CD4-positive, alpha-beta T cell (primary cell): ENCODE measurements at regions of chr20 and their contacts with region 1.

Region 1: DNA sequence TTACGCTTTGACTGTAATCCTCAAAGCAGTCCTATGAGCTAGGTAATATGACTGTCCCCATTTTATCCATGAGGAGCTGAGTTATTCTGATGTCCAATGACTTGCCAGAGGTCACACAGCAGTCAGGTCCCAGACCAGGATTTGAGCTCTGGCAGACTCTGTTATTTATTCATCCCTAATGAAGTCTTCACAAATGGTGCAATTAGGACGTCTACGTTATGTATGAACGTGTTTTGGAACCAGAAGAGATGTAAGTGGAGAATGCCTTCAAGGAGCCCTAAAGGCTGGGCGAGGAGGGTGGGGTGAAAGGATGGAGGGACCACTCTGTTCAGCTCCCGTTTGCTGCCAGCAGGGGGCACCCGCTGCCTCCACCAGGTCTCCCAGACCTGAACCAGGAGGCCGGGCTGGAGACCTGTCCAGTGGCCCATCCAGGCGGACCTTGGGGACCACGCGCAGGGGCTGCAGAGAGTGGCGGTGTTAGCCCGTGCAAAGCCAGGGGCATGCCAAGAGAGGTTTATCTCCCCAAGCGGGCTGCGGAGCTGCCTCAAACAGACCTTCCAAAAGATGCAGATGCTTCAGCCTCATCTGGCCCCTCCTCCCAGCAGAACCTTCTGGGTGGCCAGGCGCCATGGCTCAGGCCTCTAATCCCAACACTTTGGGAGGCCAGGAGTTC is 15.2 kb upstream of the ZNF335 start:
- DNase-seq: peak; percentile 64 to 86 (median 72)
- ATAC-seq: peak; percentile 97
- H3K4me3 ChIP-seq: no peak overlapping the region
- H3K4me3 Mint-ChIP-seq: no peak overlapping the region
- H3K27ac ChIP-seq: no peak overlapping the region
- H3K27ac Mint-ChIP-seq: no peak overlapping the region
- H3K4me1 ChIP-seq: peaks cover 7% of the 10 kb centered on the region
- H3K4me1 Mint-ChIP-seq: no peaks in the 10 kb centered on the region
- H3K27me3 ChIP-seq: peaks cover 0 to 5% of the 10 kb centered on the region in 2 experiments
- H3K27me3 Mint-ChIP-seq: no peaks in the 10 kb centered on the region
- CTCF ChIP-seq: peak; percentile 91

Region 2: DNA sequence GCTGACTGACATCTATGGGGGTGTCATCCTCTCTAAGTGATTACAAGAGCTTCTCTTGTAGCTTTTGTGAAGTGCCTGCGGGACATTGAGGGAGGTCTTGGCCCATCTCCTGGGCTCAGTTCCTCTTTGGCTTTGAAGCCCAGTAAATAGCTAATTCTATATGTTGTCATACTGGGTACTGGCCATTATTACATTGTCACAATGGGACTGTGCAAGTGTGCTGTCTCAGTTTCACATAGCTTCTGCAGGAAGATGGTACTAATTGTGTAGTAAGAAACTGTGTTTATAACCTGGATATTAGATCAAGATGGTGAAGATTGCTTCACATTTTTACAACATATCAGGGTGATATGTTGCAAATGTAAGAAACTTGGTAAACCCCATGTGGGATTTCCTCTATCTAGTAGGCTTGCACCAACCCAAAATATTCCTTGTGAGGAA is 491.7 kb before region 1 on chr20:
- CTCF ChIA-PET with region 1: no interaction called
- POLR2A ChIA-PET with region 1: no interaction called
- intact Hi-C with region 1: no loop called
- DNase-seq: peak in 2 of 14 experiments; percentile 19 to 20
- ATAC-seq: no peak
- H3K4me3 ChIP-seq: no peak overlapping the region
- H3K4me3 Mint-ChIP-seq: no peak overlapping the region
- H3K27ac ChIP-seq: no peak overlapping the region
- H3K27ac Mint-ChIP-seq: no peak overlapping the region
- H3K4me1 ChIP-seq: no peaks in the 10 kb centered on the region
- H3K4me1 Mint-ChIP-seq: no peaks in the 10 kb centered on the region
- H3K27me3 ChIP-seq: peaks cover 8 to 16% of the 10 kb centered on the region in 2 experiments
- H3K27me3 Mint-ChIP-seq: peaks cover 39% of the 10 kb centered on the region
- CTCF ChIP-seq: no peak

Region 3: DNA sequence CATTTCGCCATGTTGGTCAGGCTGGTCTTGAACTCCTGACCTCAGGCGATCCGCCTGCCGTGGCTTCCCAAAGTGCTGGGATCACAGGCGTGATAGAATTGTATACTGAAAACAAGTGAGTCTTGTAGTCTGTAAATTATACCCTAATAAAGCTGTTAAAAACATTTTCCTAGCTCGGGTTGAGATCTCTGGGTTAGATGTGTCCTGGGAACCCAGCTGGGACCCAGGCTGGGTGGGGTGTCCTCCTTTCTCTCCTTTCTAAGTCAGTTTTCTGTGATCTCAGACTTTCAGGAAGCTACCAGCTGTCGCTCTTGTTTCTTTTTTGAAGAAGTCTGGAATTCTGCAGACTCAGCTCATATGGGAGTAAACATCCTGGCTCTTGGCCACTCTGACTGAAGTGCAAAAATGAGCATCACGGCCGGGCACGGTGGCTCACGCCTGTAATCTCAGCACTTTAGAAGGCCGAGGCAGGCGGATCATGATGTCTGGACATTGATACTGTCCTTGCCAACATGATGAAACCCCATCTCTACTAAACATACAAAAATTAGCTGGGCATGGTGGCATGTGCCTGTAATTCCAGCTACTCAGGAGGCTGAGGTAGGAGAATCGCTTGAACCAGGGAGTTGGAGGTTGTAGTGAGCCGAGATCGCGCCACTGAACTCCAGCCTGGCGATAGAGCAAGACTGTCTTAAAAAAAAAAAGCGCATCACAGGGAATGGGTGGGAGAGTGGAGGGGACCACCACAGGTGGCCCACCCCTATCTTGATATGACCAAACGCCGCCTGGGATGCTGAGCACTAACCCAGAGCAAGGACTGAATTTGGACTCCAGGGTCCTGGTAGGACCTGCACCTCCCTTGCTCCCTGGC is 62.6 kb before region 1 on chr20:
- CTCF ChIA-PET with region 1: no interaction called
- POLR2A ChIA-PET with region 1: no interaction called
- intact Hi-C with region 1: no loop called
- DNase-seq: no peak
- ATAC-seq: no peak
- H3K4me3 ChIP-seq: no peak overlapping the region
- H3K4me3 Mint-ChIP-seq: no peak overlapping the region
- H3K27ac ChIP-seq: no peak overlapping the region
- H3K27ac Mint-ChIP-seq: no peak overlapping the region
- H3K4me1 ChIP-seq: peaks cover 3% of the 10 kb centered on the region
- H3K4me1 Mint-ChIP-seq: peaks cover 4% of the 10 kb centered on the region
- H3K27me3 ChIP-seq: no peaks in the 10 kb centered on the region
- H3K27me3 Mint-ChIP-seq: peaks cover 7% of the 10 kb centered on the region
- CTCF ChIP-seq: no peak

Region 4: DNA sequence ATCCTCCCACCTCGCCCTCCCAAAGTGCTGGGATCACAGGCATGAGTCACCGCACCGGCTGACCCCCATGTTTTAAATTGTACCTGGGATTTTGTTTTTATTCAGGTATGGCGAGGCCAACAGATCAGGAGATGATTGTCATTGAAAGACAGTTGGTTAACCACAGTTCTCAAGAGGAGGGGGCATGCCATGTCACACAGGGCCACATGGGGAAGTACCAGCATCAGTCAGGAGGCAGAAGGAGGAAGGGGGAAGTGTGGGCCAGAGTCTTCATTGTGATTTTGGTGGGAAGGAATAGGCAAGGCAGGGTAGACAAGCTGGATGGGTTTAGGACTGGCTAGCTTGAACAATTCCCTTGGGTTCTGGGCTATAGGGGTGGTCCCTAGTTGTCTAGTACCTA is 11.5 kb after region 1 on chr20:
- CTCF ChIA-PET with region 1: interaction called, 20 read pairs
- POLR2A ChIA-PET with region 1: interaction called, 5 read pairs
- intact Hi-C with region 1: no loop called
- DNase-seq: peak in 3 of 14 experiments; percentile 49 to 77 (median 73)
- ATAC-seq: peak; percentile 84
- H3K4me3 ChIP-seq: no peak overlapping the region
- H3K4me3 Mint-ChIP-seq: peak overlapping the region; percentile 43
- H3K27ac ChIP-seq: no peak overlapping the region
- H3K27ac Mint-ChIP-seq: peak overlapping the region; percentile 8
- H3K4me1 ChIP-seq: peaks cover 70% of the 10 kb centered on the region
- H3K4me1 Mint-ChIP-seq: peaks cover 71% of the 10 kb centered on the region
- H3K27me3 ChIP-seq: no peaks in the 10 kb centered on the region
- H3K27me3 Mint-ChIP-seq: no peaks in the 10 kb centered on the region
- CTCF ChIP-seq: no peak

Region 5: DNA sequence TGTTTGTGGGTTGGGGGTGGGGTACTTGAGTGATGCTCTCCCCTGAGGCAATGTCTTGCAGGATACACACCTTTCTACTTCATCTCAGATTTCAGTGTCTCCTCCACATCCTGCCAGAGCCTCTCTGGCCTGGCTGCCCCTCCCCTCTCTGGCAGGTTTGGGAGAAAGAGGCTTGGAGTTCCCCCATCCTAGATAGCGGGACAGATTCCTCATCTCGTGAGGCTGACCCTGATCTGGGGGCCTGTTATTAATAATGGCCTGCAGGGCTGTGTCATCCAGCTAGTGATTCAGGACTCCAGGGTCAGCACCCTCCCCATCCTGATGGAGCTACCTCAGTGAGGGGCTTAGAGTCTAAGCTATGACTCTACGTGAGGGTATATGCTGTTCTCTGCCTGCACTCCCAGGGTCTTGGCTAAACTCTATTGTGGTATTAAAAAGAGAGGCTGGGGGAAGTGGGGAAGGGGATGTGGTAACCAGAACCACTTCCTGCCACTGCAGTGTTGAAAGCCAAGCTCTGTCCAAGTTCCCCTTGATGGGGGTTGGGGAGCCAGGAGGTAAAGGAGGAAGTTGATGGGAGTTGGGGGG is 17.7 kb after region 1 on chr20:
- CTCF ChIA-PET with region 1: interaction called, 20 read pairs
- POLR2A ChIA-PET with region 1: interaction called, 3 read pairs
- intact Hi-C with region 1: loop called in 1 of 2 experiments (anchors 2 kb)
- DNase-seq: peak in 6 of 14 experiments; percentile 18 to 78 (median 62)
- ATAC-seq: peak; percentile 79
- H3K4me3 ChIP-seq: peak overlapping the region; percentile 44
- H3K4me3 Mint-ChIP-seq: peak overlapping the region; percentile 85
- H3K27ac ChIP-seq: no peak overlapping the region
- H3K27ac Mint-ChIP-seq: peak overlapping the region; percentile 88
- H3K4me1 ChIP-seq: peaks cover 79% of the 10 kb centered on the region
- H3K4me1 Mint-ChIP-seq: peaks cover 84% of the 10 kb centered on the region
- H3K27me3 ChIP-seq: peaks cover 13 to 18% of the 10 kb centered on the region in 2 experiments
- H3K27me3 Mint-ChIP-seq: peaks cover 24% of the 10 kb centered on the region
- CTCF ChIP-seq: no peak

Region 6: GRCh38 chr20:46013826-46014516 is 26.7 kb after region 1 on chr20:
- CTCF ChIA-PET with region 1: interaction called, 27 read pairs
- POLR2A ChIA-PET with region 1: interaction called, 3 read pairs
- intact Hi-C with region 1: loop called (anchors 1 kb)
- DNase-seq: peak; percentile 46 to 88 (median 60)
- ATAC-seq: peak; percentile 57
- H3K4me3 ChIP-seq: peak overlapping the region; percentile 43
- H3K4me3 Mint-ChIP-seq: peak overlapping the region; percentile 35
- H3K27ac ChIP-seq: no peak overlapping the region
- H3K27ac Mint-ChIP-seq: no peak overlapping the region
- H3K4me1 ChIP-seq: peaks cover 55% of the 10 kb centered on the region
- H3K4me1 Mint-ChIP-seq: peaks cover 62% of the 10 kb centered on the region
- H3K27me3 ChIP-seq: peaks cover 41 to 48% of the 10 kb centered on the region in 2 experiments
- H3K27me3 Mint-ChIP-seq: peaks cover 86% of the 10 kb centered on the region
- CTCF ChIP-seq: peak; percentile 96

Region 7: DNA sequence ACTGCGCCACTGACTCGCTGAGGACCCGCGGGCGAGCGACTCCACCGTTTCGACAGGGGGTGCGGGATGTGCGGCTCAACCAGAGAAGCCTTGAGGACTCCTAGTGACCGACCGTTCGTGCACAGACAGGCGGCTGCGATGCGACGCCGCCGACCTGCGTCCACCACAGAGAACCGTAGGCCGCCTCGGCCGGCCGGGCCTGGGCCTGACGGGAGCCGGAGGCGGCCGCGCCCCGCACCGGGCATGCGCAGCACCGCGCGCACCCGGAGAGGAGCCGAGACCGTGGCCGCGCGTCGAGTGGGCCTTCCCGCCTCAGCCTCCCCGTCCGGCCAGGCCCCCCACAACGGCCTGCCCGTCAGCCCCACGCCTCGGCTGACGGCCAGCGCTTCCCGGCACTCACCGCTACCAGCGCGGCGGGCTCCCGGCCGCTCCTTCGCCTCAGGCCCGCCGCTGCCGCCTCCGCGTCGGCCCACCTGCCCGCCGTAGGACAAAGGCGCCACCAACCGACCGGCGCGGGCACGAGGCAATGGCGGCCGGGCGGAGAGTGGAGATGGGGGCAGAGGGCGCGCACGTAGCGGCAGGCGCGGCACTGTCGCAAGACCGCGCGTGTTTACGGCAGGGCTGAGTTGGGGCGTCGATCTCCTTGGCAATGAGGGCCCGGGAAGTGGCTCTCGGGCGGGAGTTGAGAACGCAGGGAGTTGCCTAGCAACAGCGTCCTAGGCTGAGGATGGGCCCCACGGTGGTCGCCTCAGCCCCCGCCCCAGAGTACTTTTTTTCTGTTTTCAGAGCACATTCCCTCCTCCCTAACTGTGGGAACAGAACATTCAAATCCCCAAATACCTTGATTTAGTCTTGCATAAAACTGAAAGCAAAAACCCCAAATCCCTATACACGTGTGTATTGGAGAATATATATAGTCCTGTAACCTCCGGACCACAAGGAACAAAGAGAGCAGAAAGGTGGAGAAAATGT is 102.5 kb after region 1 on chr20 and contains the start of gene NCOA5:
- CTCF ChIA-PET with region 1: interaction called, 4 read pairs
- POLR2A ChIA-PET with region 1: no interaction called
- intact Hi-C with region 1: loop called in 1 of 2 experiments (anchors 1 kb)
- DNase-seq: peak; percentile 86 to 97 (median 92)
- ATAC-seq: peak; percentile 90
- H3K4me3 ChIP-seq: peak within 1 kb of the TSS; percentile 95
- H3K4me3 Mint-ChIP-seq: peak within 1 kb of the TSS; percentile 94
- H3K27ac ChIP-seq: peak within 1 kb of the TSS; percentile 67 to 85
- H3K27ac Mint-ChIP-seq: peak within 1 kb of the TSS; percentile 86
- H3K4me1 ChIP-seq: peaks cover 22% of the 10 kb centered on the region
- H3K4me1 Mint-ChIP-seq: peaks cover 54% of the 10 kb centered on the region
- H3K27me3 ChIP-seq: peaks cover 0 to 3% of the 10 kb centered on the region in 2 experiments
- H3K27me3 Mint-ChIP-seq: no peaks in the 10 kb centered on the region
- CTCF ChIP-seq: no peak
- total RNA-seq, gene NCOA5: 9.7 to 10.5 TPM

Region 8: DNA sequence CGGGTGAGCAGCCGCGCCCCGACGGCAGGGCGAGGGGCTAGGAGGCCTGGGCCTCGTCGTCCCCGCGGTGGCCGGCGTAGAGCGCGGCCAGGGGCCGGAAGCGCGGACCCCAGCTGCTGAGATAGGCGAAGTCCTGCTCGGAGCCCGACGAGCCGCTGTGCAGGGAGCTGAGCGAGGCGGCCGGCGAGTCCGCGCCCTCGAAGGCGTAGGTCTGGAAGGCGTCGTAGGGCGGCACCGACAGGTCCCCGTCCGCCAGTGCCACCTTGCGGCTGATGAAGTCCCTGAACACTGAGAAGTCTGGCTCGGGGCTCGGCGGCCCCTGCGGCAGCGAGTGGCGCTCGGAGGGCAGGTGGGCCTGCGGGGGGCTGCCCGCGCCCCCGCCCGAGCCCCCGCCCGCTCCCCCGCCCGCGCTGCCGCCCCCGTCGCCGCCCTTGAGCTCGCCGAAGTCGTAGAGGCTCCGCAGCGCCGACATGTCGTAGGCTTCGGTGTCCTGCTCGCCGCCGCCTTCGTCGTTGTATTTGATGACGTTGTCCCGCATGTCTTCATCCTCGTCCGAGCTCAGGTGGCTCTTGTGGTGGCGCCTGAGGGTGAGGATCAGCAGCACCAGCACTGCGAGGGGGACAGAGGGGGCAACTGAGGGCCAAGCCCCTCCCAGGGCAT is 187.4 kb after region 1 on chr20:
- CTCF ChIA-PET with region 1: interaction called, 3 read pairs
- POLR2A ChIA-PET with region 1: no interaction called
- intact Hi-C with region 1: loop called in 1 of 2 experiments (anchors 10 kb)
- DNase-seq: peak; percentile 50 to 83 (median 64)
- ATAC-seq: peak; percentile 90
- H3K4me3 ChIP-seq: no peak overlapping the region
- H3K4me3 Mint-ChIP-seq: no peak overlapping the region
- H3K27ac ChIP-seq: no peak overlapping the region
- H3K27ac Mint-ChIP-seq: no peak overlapping the region
- H3K4me1 ChIP-seq: peaks cover 3% of the 10 kb centered on the region
- H3K4me1 Mint-ChIP-seq: no peaks in the 10 kb centered on the region
- H3K27me3 ChIP-seq: peaks cover 25 to 49% of the 10 kb centered on the region in 2 experiments
- H3K27me3 Mint-ChIP-seq: peaks cover 90% of the 10 kb centered on the region
- CTCF ChIP-seq: peak; percentile 39